IMR-90 (cell line): ENCODE measurements at regions of chr19 and their contacts with region 1.

Region 1: DNA sequence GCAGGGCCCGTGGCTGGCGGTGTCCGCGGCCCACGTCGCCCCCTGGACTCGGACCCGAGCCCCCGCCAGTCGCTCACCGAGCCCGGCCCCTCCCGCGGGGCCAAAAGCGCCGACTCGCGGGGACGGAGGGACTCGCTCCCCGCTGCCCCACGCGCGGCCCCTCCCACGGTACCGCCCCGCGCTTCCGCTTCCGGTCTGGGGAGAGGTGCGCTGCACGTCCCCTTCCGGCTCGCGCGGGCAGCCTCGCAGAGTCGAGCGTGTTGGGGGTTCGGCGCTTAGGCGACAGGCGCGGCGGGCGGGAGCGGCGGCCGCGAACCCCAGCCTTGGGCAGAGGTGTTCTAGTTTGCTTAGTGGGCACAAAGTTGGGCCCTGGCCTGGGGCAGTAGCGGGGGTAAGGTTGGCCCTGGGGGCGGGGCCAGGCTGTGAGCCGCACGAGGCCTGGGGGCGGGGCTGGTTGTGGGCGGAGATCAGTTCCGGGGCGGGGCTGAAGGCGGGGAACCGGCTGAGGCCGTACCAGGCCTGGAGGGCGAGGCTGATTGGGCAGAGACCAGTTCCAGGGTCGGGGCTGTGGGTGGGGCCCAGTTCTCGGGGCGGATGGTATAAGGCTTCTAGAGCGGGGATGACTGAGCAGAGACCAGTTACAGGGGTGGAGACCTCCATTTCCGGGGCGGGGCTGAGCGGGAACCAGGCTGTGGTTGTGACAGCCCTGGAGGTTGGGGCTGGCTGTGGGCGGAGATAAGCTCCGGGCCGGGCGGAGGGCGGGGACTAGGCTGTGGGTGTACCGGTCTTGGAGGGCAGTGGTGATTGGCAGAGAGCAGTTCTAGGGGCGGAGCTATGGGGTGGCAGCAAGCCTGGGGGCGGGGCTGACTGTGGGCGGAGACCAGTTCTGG is at the starts of genes MBD3L1 and ZNF558:
- DNase-seq: peak; percentile 97
- ATAC-seq: peak; percentile 92
- H3K4me3 ChIP-seq: peak within 1 kb of the TSS; percentile 73
- H3K27ac ChIP-seq: peak within 1 kb of the TSS; percentile 87
- H3K4me1 ChIP-seq: peaks cover 4% of the 10 kb centered on the region
- H3K27me3 ChIP-seq: no peaks in the 10 kb centered on the region
- CTCF ChIP-seq: peak; percentile 39
- POLR2A ChIP-seq: peak; percentile 89
- RAD21 ChIP-seq: no peak
- total RNA-seq, gene MBD3L1: not detected in 2 replicates
- total RNA-seq, gene ZNF558: 16.7 and 21.0 TPM in 2 replicates

Region 2: GRCh38 chr19:8605514-8605913 is 226.9 kb before region 1 on chr19:
- CTCF ChIA-PET with region 1: no interaction called
- POLR2A ChIA-PET with region 1: no interaction called
- dilution Hi-C with region 1: no loop called
- in situ Hi-C with region 1: no loop called
- intact Hi-C with region 1: no loop called
- DNase-seq: no peak
- ATAC-seq: no peak
- H3K4me3 ChIP-seq: no peak overlapping the region
- H3K27ac ChIP-seq: no peak overlapping the region
- H3K4me1 ChIP-seq: peaks cover 4% of the 10 kb centered on the region
- H3K27me3 ChIP-seq: no peaks in the 10 kb centered on the region
- CTCF ChIP-seq: no peak
- POLR2A ChIP-seq: no peak
- RAD21 ChIP-seq: no peak

Region 3: DNA sequence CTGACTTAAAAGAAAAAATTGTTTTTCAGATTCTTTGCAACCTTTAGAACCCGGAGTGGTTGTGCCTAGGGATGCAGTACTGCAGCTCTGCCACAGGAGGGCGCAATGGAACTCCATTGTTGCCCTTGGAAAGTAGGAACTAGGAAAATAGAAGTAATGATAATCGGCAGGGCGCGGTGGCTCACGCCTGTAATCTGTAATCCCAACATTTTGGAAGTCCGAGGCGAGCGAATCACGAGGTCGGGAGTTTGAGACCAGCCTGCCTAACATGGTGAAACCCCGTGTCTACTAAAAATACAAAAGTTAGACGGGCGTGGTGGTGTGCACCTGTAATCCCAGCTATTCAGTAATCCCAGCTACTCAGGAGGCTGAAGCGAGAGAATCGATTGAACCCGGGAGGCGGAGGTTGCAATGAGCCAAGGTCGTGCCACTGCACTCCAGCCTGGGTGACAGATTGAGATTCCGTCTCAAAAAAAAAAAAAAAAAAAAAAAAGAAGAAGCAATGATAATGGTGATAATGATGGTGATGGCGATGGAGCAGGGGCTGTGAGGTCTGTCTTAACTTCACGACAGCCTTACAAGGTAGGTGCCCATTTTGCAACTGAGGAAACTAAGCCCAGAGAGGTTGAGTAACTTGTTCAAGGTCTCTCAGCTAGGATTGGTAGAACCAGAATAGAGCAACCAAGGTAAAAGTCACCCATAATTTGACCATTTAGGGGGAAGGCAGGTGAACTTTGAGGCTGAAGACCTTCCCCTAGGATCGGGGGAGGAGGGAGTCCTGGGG is 216.4 kb before region 1 on chr19:
- CTCF ChIA-PET with region 1: no interaction called
- POLR2A ChIA-PET with region 1: no interaction called
- dilution Hi-C with region 1: no loop called
- in situ Hi-C with region 1: no loop called
- intact Hi-C with region 1: loop called (anchors 5 kb)
- DNase-seq: peak; percentile 55
- ATAC-seq: peak; percentile 66
- H3K4me3 ChIP-seq: no peak overlapping the region
- H3K27ac ChIP-seq: no peak overlapping the region
- H3K4me1 ChIP-seq: peaks cover 2% of the 10 kb centered on the region; the same call in 1 of the 2 replicates
- H3K27me3 ChIP-seq: peaks cover 6% of the 10 kb centered on the region; the same call in 1 of the 2 replicates
- CTCF ChIP-seq: peak; percentile 92
- POLR2A ChIP-seq: no peak
- RAD21 ChIP-seq: peak; percentile 65

Region 4: DNA sequence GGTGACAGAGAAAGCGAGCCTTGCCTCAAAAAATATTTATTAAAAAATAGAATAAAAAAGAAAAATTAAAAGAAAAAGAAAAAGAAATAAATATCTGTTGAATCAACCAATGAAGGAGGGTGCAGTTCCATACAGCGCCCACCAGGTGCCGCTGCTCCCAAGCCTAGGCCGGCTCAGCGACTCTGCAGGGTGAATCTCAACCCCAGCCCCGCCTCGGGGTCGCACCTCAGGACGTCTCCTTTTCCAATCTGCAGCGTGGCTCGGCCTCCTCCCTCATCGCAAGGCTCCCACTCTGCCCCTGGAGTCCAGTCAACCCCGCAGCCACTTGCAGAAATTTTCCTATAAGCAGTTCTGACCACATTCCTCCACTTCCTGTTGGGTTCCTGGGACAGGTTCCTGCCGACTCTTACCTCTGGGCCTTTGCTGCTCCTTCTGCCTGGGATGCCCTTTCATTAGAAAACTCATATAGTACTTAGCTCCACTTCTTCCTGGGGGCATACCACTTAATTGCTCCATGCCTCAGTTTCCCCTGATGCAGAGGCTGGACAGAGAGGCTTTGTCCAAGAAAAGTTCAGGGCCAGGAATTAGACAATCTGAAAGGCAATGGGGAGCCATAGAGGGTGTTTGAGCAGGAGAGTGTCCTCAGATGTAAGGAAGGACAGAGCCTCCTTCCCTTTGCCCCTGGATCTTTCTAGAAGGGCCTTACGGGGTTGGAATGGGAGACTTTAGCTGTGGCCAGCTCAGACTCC is 177.6 kb before region 1 on chr19:
- CTCF ChIA-PET with region 1: interaction called, 4 read pairs
- POLR2A ChIA-PET with region 1: no interaction called
- dilution Hi-C with region 1: no loop called
- in situ Hi-C with region 1: no loop called
- intact Hi-C with region 1: loop called (anchors 1 kb)
- DNase-seq: peak; percentile 27
- ATAC-seq: peak; percentile 98
- H3K4me3 ChIP-seq: no peak overlapping the region
- H3K27ac ChIP-seq: no peak overlapping the region
- H3K4me1 ChIP-seq: no peaks in the 10 kb centered on the region
- H3K27me3 ChIP-seq: peaks cover 3% of the 10 kb centered on the region; the same call in 1 of the 2 replicates
- CTCF ChIP-seq: peak; percentile 87
- POLR2A ChIP-seq: no peak
- RAD21 ChIP-seq: peak; percentile 77

Region 5: GRCh38 chr19:8846819-8847218 is 14.4 kb after region 1 on chr19:
- CTCF ChIA-PET with region 1: interaction called, 3 read pairs
- POLR2A ChIA-PET with region 1: interaction called, 15 read pairs
- dilution Hi-C with region 1: no loop called
- in situ Hi-C with region 1: no loop called
- intact Hi-C with region 1: no loop called
- DNase-seq: no peak
- ATAC-seq: no peak
- H3K4me3 ChIP-seq: no peak overlapping the region
- H3K27ac ChIP-seq: no peak overlapping the region
- H3K4me1 ChIP-seq: no peaks in the 10 kb centered on the region
- H3K27me3 ChIP-seq: no peaks in the 10 kb centered on the region
- CTCF ChIP-seq: no peak
- POLR2A ChIP-seq: no peak
- RAD21 ChIP-seq: no peak

Region 6: GRCh38 chr19:9075064-9075949 is 242.9 kb after region 1 on chr19:
- CTCF ChIA-PET with region 1: no interaction called
- POLR2A ChIA-PET with region 1: no interaction called
- dilution Hi-C with region 1: no loop called
- in situ Hi-C with region 1: no loop called
- intact Hi-C with region 1: loop called (anchors 1 kb)
- DNase-seq: peak; percentile 83
- ATAC-seq: peak; percentile 78
- H3K4me3 ChIP-seq: no peak overlapping the region
- H3K27ac ChIP-seq: no peak overlapping the region
- H3K4me1 ChIP-seq: no peaks in the 10 kb centered on the region
- H3K27me3 ChIP-seq: no peaks in the 10 kb centered on the region
- CTCF ChIP-seq: no peak
- POLR2A ChIP-seq: no peak
- RAD21 ChIP-seq: no peak